HepG2 (cell line): ENCODE measurements at regions of chr4 and their contacts with region 1.

Region 1: GRCh38 chr4:169010125-169011023 is at the start of gene CBR4:
- DNase-seq: peak; percentile 97
- ATAC-seq: peak; percentile 98
- H3K4me3 ChIP-seq: peak within 1 kb of the TSS; percentile 79 to 96 (median 82)
- H3K27ac ChIP-seq: peak within 1 kb of the TSS; percentile 90
- H3K4me1 ChIP-seq: peaks cover 75% of the 10 kb centered on the region
- H3K27me3 ChIP-seq: peaks cover 0 to 3% of the 10 kb centered on the region in 2 experiments; a peak in 1 of 5 replicates
- CTCF ChIP-seq: no peak; the same call in 1 of the 2 replicates
- EP300 ChIP-seq: no peak
- POLR2A ChIP-seq: peak; percentile 90 to 91
- RAD21 ChIP-seq: no peak
- total RNA-seq, gene CBR4: 20.7 and 21.9 TPM in 2 replicates

Region 2: DNA sequence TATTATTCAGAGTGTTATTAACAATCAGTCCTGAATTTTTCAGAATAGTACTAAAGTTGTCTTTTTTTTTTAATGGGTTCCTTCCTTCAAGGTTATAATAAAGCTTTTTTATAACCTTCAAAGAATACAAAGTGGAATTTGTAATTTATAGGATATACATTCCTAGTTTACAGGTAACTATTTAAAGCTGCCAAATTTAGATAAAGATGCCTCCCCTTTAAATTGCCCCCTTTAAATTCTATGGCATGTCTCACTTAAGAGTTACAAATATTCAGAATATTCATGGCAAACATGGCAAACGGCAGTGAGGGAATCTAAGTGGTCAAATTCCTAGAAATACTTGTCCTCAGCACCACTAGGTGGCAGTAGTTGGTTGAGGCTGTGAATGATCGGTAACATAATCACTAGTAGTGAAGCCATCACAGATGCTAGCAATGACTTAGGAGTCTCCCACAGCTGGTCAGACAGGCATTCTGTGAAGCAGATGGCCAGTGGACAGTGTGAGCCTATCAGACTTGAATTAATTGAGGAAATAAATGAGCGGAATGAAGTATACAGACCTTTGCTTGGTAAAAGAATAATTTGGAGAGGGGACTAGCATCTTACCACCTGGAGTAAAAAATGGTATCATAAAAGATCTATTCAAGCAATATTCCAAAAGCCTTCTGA is 86.7 kb before region 1 on chr4:
- CTCF ChIA-PET with region 1: interaction called, 10 read pairs
- POLR2A ChIA-PET with region 1: interaction called, 5 read pairs
- in situ Hi-C with region 1: loop called (anchors 10 kb)
- intact Hi-C with region 1: loop called (anchors 1 kb)
- DNase-seq: peak; percentile 62
- ATAC-seq: peak; percentile 76
- H3K4me3 ChIP-seq: no peak overlapping the region
- H3K27ac ChIP-seq: no peak overlapping the region
- H3K4me1 ChIP-seq: peaks cover 30% of the 10 kb centered on the region
- H3K27me3 ChIP-seq: no peaks in the 10 kb centered on the region
- CTCF ChIP-seq: peak; percentile 89
- EP300 ChIP-seq: no peak
- POLR2A ChIP-seq: no peak
- RAD21 ChIP-seq: peak; percentile 72

Region 3: DNA sequence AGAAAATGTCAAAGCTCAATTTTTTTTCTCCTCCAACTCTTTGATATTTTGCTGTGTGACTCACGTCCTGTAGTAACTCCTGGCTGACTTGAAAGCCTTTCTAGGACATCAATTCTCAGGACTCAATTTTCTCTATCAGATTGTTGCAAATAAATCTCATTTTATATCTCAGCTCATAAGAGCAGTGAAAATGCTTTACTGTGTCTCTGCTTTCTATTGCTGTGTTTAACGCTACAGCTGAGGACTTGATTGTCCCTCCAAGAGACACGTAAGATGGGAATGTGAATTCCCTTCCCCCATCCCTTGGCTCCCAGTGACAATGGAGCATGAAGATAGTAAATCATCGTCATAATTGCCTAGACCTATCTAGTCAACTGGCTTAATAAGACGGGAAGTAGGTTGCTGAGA is 20.2 kb after region 1 on chr4:
- CTCF ChIA-PET with region 1: no interaction called
- POLR2A ChIA-PET with region 1: interaction called, 12 read pairs
- in situ Hi-C with region 1: no loop called
- intact Hi-C with region 1: no loop called
- DNase-seq: peak; percentile 35
- ATAC-seq: no peak
- H3K4me3 ChIP-seq: peak overlapping the region; percentile 41 to 72 (median 64); a peak in 5 of 6 replicates
- H3K27ac ChIP-seq: no peak overlapping the region
- H3K4me1 ChIP-seq: peaks cover 21% of the 10 kb centered on the region
- H3K27me3 ChIP-seq: no peaks in the 10 kb centered on the region
- CTCF ChIP-seq: no peak
- EP300 ChIP-seq: no peak
- POLR2A ChIP-seq: no peak
- RAD21 ChIP-seq: no peak

Region 4: GRCh38 chr4:169079942-169080827 is 69.8 kb after region 1 on chr4:
- CTCF ChIA-PET with region 1: no interaction called
- POLR2A ChIA-PET with region 1: interaction called, 5 read pairs
- in situ Hi-C with region 1: no loop called
- intact Hi-C with region 1: loop called (anchors 5 kb)
- DNase-seq: peak; percentile 88
- ATAC-seq: peak; percentile 95
- H3K4me3 ChIP-seq: peak overlapping the region in 2 of 3 experiments; percentile 28 to 60; a peak in 4 of 6 replicates
- H3K27ac ChIP-seq: no peak overlapping the region
- H3K4me1 ChIP-seq: peaks cover 22% of the 10 kb centered on the region
- H3K27me3 ChIP-seq: no peaks in the 10 kb centered on the region
- CTCF ChIP-seq: no peak
- EP300 ChIP-seq: peak in 1 of 2 experiments; percentile 53; a peak in 1 of 4 replicates
- POLR2A ChIP-seq: peak in 1 of 2 experiments; percentile 32; a peak in 1 of 4 replicates
- RAD21 ChIP-seq: no peak

Region 5: DNA sequence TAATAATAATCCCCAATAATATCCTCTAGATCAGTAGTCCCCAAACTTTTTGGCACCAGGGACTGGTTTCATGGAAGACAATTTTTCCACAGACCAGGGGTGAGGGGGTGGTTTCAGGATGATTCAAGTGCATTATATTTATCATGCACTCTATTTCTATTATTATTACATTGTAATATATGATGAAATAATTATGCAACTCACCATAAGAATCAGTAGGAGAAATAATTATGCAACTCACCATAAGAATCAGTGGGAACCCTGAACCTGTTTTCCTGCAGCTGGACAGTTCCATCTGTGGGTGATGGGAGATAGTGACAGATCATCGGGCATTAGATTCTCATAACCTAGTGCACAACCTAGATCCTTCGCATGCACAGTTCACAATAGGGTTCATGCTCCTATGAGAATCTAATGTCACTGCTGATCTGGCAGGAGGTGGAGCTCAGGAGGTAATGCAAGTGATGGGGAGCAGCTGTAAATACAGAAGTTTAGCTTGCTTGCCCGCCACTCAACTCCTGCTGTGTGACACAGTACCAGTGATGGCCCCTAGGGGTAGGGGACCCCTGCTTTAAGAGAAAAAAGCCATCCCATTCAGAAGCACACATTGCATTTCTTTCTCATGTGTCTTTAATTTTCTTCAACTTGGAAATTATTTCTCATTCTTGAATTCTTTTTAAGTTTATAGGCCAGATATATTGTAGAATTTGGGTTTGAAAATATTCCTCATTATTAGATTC is 276.4 kb after region 1 on chr4:
- CTCF ChIA-PET with region 1: no interaction called
- POLR2A ChIA-PET with region 1: no interaction called
- in situ Hi-C with region 1: no loop called
- intact Hi-C with region 1: no loop called
- DNase-seq: no peak
- ATAC-seq: peak; percentile 96
- H3K4me3 ChIP-seq: no peak overlapping the region
- H3K27ac ChIP-seq: no peak overlapping the region
- H3K4me1 ChIP-seq: no peaks in the 10 kb centered on the region
- H3K27me3 ChIP-seq: no peaks in the 10 kb centered on the region
- CTCF ChIP-seq: 0 out of 2 replicates have a peak, but pooled peaks have one; percentile 13
- EP300 ChIP-seq: no peak
- POLR2A ChIP-seq: no peak
- RAD21 ChIP-seq: no peak

Region 6: GRCh38 chr4:169566021-169566818 is 555.8 kb after region 1 on chr4:
- CTCF ChIA-PET with region 1: no interaction called
- POLR2A ChIA-PET with region 1: no interaction called
- in situ Hi-C with region 1: no loop called
- intact Hi-C with region 1: loop called (anchors 10 kb)
- DNase-seq: peak; percentile 43
- ATAC-seq: peak; percentile 80
- H3K4me3 ChIP-seq: no peak overlapping the region
- H3K27ac ChIP-seq: no peak overlapping the region
- H3K4me1 ChIP-seq: no peaks in the 10 kb centered on the region
- H3K27me3 ChIP-seq: no peaks in the 10 kb centered on the region
- CTCF ChIP-seq: peak; percentile 50
- EP300 ChIP-seq: no peak
- POLR2A ChIP-seq: no peak
- RAD21 ChIP-seq: 0 out of 2 replicates have a peak, but pooled peaks have one; percentile 9